ENCODE measurements at regions of chr4 and their contacts with region 1.

Region 1: DNA sequence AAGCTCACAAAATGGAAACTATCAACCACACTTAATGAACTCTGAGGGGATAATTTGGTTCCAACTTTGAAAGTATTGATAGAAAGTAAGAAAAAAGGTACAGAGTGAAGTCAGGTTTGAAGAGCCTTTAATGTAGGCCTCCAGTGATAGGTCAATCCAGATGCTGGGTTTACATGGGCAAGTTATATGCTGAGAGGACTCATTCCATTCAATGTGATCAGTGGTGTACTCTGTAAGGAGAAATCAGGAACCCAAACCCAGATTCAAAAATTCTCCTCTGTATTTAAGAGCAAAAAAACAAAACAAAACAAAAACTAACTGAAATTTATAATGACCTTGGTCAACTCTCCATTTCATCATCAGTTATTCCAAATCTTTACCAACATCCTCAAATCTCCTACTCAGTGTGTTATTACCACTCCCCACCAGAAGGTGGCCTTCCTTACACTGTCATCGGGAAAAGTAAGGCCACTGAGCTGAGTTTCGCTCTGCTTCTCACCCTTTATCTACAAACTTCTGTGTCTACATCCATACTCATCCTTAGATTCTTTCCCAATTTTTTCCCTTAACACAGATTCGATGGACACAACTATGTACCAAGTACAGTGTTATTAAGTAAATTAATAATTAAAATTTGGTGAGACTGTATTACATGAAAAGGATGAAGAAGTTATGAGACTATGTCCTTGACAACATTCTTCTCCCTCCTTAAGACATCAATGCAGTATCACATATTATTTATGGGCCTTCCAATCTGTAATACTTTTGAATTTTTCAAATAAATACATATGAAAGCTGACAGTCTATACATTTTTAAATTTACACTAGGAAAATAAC is 88.3 kb downstream of the ZAR1 start:
- DNase-seq: peak; percentile 59 to 64
- H3K4me3 ChIP-seq: no peak overlapping the region
- H3K27ac ChIP-seq: no peak overlapping the region
- H3K4me1 ChIP-seq: no peaks in the 10 kb centered on the region
- H3K27me3 ChIP-seq: no peaks in the 10 kb centered on the region
- CTCF ChIP-seq: peak; percentile 68 to 95 (median 82)
- POLR2A ChIP-seq: no peak

Region 2: DNA sequence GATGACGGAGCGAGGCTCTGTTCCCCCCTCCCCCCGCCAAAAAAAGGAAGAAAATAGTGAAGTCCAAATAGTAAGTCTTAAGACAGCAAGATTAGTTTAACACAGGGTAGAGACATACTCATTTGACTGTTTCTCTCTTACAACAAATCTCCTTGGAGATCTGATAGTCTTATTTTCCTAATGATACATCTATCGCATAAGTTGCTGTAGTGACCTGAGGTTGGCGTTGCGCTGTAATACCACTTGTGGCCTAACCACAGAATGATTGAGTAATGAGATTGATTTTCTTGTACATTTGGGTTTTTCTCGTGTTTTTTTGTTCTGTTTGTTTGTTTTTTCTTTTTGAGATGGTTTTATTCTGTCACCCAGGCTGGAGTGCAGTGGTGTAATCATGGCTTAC is 279.8 kb after region 1 on chr4:
- intact Hi-C with region 1: loop called (anchors 10 kb)
- DNase-seq: no peak
- H3K4me3 ChIP-seq: no peak overlapping the region
- H3K27ac ChIP-seq: no peak overlapping the region
- H3K4me1 ChIP-seq: no peaks in the 10 kb centered on the region
- H3K27me3 ChIP-seq: no peaks in the 10 kb centered on the region
- CTCF ChIP-seq: no peak
- POLR2A ChIP-seq: no peak

Region 3: GRCh38 chr4:48963042-48963679 is 384.8 kb after region 1 on chr4:
- intact Hi-C with region 1: loop called (anchors 10 kb)
- DNase-seq: peak; percentile 62 to 79
- H3K4me3 ChIP-seq: no peak overlapping the region
- H3K27ac ChIP-seq: no peak overlapping the region
- H3K4me1 ChIP-seq: peaks cover 9 to 12% of the 10 kb centered on the region in 2 donors
- H3K27me3 ChIP-seq: no peaks in the 10 kb centered on the region
- CTCF ChIP-seq: peak; percentile 67 to 99 (median 92)
- POLR2A ChIP-seq: no peak

Measured in thyroid gland (tissue), 4 donors.